Activated B cell treated with CpG ODN at 0.5 μM for 24 hours (primary cell): ENCODE measurements at regions of chr9 and their contacts with region 1.

Region 1: DNA sequence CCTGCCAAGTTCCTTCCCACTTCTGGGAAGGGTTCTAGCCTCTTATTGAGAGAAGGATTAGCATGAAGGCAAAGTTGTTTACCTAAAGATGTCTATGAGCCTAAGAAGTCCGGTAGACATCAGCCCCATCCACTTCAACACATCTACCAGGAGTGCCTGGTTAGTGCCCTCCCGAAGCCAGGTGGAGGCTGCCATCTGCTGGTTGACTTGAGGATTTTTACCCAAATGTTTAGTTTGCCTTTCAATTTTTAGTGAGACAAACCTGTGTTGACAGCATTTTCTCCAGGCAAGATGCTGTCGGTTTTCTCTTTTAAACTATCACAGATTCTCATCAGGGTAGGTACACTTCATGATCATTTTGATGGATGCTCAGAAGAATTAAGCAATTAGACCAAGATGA is 83.6 kb upstream of the TNFSF8 start:
- DNase-seq: peak; percentile 46
- ATAC-seq: peak; percentile 79
- H3K4me3 Mint-ChIP-seq: no peak overlapping the region
- H3K27ac Mint-ChIP-seq: no peak overlapping the region
- H3K4me1 Mint-ChIP-seq: peaks cover 5% of the 10 kb centered on the region
- H3K27me3 Mint-ChIP-seq: peaks cover 8% of the 10 kb centered on the region
- CTCF ChIP-seq: no peak

Region 2: GRCh38 chr9:114434878-114435311 is 579.1 kb before region 1 on chr9:
- CTCF ChIA-PET with region 1: no interaction called
- POLR2A ChIA-PET with region 1: no interaction called
- intact Hi-C with region 1: loop called (anchors 10 kb)
- DNase-seq: no peak
- ATAC-seq: peak; percentile 81
- H3K4me3 Mint-ChIP-seq: no peak overlapping the region
- H3K27ac Mint-ChIP-seq: no peak overlapping the region
- H3K4me1 Mint-ChIP-seq: no peaks in the 10 kb centered on the region
- H3K27me3 Mint-ChIP-seq: no peaks in the 10 kb centered on the region
- CTCF ChIP-seq: no peak

Region 3: DNA sequence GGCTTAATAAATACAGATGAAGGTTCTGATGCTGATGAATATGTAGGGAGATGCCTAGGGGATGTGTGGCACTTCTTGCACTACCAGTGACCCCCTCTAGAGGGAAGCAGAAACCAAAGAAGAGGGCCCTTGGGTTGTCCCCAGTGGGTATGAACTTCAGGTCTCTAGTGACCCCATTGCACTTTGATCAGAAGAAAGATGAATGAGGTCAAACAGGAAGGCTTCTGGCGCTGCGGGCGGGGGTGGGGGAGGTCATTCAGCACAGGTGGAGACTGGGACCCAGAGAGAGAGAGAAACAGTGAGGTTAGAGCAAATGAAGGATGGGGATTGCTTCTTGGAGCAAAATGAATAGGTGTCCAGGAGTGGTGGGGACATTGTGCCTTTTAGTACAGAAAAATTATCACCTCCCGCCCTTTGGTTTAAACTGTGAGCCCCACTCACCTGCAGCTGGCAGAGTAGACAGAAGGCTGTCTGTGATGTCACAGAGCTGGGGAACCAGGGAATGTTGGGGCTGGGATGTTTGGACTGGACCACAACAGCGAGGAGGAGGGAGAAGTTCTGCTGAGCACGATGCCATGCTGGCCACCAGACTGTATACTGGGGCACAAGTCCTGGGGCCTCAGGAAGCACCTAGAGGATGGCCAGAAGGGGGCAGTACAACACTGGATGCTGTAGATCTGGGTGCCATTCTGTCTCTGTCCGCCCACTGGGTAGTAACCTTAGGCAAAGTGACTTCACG is 332.2 kb before region 1 on chr9 and contains the start of gene TEX48:
- CTCF ChIA-PET with region 1: interaction called, 50 read pairs
- POLR2A ChIA-PET with region 1: no interaction called
- intact Hi-C with region 1: loop called (anchors 1 kb)
- DNase-seq: no peak
- ATAC-seq: peak; percentile 94
- H3K4me3 Mint-ChIP-seq: no peak within 1 kb of the TSS
- H3K27ac Mint-ChIP-seq: peak within 1 kb of the TSS; percentile 36
- H3K4me1 Mint-ChIP-seq: peaks cover 5% of the 10 kb centered on the region
- H3K27me3 Mint-ChIP-seq: peaks cover 24% of the 10 kb centered on the region
- CTCF ChIP-seq: no peak
- total RNA-seq, gene TEX48: not detected in 2 replicates

Region 4: DNA sequence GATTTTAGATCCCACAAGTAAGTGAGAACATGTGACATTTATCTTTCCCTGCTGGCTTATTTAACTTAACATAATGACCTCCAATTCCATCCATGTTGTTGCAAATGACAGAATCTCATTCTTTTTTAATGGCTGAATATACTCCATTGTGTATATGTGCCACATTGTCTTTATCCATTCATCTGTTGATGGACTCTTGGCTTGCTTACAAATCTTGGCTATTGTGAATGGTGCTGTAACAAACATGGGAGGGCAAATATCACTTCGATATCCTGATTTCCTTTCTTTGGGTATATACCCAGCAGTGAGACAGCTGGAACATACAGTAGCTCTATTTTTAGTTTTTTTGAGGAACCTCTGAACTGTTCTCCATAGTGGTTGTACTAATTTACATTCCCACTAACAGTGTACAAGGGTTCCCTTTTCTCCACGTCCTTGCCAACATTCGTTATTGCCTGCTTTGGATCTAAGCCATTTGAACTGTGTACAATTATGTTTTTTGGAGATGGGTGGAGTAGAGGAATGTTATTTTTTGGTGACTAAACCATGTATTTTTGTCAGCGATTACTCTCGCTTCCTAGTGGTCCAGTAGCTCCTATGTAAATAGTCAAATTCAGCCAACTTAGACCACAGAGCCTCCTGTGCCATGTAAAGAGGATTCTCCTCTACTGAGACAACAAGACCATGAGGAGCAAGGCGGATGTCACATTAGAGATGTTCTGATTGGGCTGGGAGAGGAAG is 268.7 kb before region 1 on chr9:
- CTCF ChIA-PET with region 1: interaction called, 16 read pairs
- POLR2A ChIA-PET with region 1: no interaction called
- intact Hi-C with region 1: no loop called
- DNase-seq: no peak
- ATAC-seq: no peak
- H3K4me3 Mint-ChIP-seq: no peak overlapping the region
- H3K27ac Mint-ChIP-seq: no peak overlapping the region
- H3K4me1 Mint-ChIP-seq: no peaks in the 10 kb centered on the region
- H3K27me3 Mint-ChIP-seq: peaks cover 2% of the 10 kb centered on the region
- CTCF ChIP-seq: no peak

Region 5: GRCh38 chr9:114906908-114907571 is 107.0 kb before region 1 on chr9:
- CTCF ChIA-PET with region 1: interaction called, 15 read pairs
- POLR2A ChIA-PET with region 1: no interaction called
- intact Hi-C with region 1: loop called (anchors 1 kb)
- DNase-seq: no peak
- ATAC-seq: no peak
- H3K4me3 Mint-ChIP-seq: no peak overlapping the region
- H3K27ac Mint-ChIP-seq: no peak overlapping the region
- H3K4me1 Mint-ChIP-seq: peaks cover 59% of the 10 kb centered on the region
- H3K27me3 Mint-ChIP-seq: no peaks in the 10 kb centered on the region
- CTCF ChIP-seq: no peak

Region 6: GRCh38 chr9:115038178-115038577 is 24.2 kb after region 1 on chr9:
- CTCF ChIA-PET with region 1: no interaction called
- POLR2A ChIA-PET with region 1: no interaction called
- intact Hi-C with region 1: no loop called
- DNase-seq: no peak
- ATAC-seq: no peak
- H3K4me3 Mint-ChIP-seq: no peak overlapping the region
- H3K27ac Mint-ChIP-seq: no peak overlapping the region
- H3K4me1 Mint-ChIP-seq: peaks cover 10% of the 10 kb centered on the region
- H3K27me3 Mint-ChIP-seq: peaks cover 5% of the 10 kb centered on the region
- CTCF ChIP-seq: no peak

Region 7: GRCh38 chr9:116661037-116661954 is 1647.3 kb after region 1 on chr9:
- CTCF ChIA-PET with region 1: no interaction called
- POLR2A ChIA-PET with region 1: no interaction called
- intact Hi-C with region 1: loop called (anchors 10 kb)
- DNase-seq: no peak
- ATAC-seq: peak; percentile 49
- H3K4me3 Mint-ChIP-seq: no peak overlapping the region
- H3K27ac Mint-ChIP-seq: no peak overlapping the region
- H3K4me1 Mint-ChIP-seq: no peaks in the 10 kb centered on the region
- H3K27me3 Mint-ChIP-seq: no peaks in the 10 kb centered on the region
- CTCF ChIP-seq: no peak